Left colon (tissue), 2 donors: ENCODE measurements at regions of chr2 and their contacts with region 1.

Region 1: DNA sequence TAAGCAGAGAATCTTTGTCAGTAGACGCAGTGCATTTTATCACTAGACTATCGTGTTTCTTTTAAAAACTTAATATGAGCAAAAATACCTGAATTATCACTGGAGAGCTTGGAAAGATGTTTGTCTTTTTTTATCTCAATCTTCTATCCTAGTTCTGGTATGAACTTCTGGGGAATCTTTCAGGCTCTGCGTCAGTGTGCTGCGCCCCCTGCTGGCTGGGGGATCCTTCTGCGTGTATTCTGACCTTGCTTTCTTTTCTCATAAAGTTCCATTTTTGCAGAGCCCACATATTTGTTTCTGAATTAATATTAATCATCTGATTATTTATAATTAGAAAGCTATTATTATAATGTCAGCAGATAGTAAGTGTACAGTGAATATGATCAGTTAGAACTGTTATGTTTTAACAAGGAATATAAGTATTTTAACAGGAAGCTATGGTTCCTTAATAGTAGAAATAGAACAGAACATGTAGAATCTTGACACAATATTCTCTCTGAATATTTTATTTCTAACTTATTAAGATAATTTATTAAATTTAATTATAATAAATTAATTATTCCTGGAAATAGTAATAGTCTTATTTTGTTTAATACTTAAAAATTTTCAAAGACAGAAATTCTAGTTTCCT is 945.0 kb upstream of the CRIM1 start:
- DNase-seq: peak in 1 of 2 donors; percentile 44
- ATAC-seq: no peak

Region 2: GRCh38 chr2:33681369-33681757 is 1729.2 kb before region 1 on chr2:
- intact Hi-C with region 1: loop called in 1 of 2 experiments (anchors 10 kb)
- DNase-seq: no peak
- ATAC-seq: no peak

Region 3: DNA sequence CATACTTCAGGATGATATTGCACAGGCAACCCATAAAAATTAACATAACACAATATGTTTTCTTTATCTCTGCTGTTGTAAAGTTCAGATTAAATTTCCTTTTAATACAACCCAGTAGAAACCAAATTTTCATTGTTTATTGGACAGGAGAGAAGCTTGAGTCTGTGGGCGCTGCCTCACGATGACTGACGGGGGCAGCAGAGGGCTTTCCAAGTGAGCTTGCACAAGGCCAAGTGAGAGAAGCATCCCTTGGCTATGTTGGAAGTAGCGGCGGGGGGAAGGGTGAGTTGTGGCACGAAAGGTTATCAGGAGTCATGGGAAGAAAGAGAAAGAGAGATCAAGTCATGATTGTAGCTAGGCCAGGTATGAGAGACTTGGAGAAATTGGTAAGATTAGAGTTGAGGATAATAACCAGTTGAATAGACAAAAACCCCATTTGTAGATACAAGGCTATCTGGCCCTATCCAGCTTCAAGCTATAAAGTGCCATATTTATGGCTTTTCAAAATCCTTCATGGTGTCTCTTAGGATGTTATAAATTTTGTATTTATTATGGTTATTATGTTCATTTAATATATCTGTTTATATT is 1397.7 kb before region 1 on chr2:
- intact Hi-C with region 1: loop called in 1 of 2 experiments (anchors 10 kb)
- DNase-seq: peak; percentile 28 to 57
- ATAC-seq: peak; percentile 78